ENCODE measurements at regions of chr2 and their contacts with region 1.

Region 1: GRCh38 chr2:215949991-215950404 is 63.4 kb downstream of the MREG start:
- DNase-seq: no peak
- H3K4me3 Mint-ChIP-seq: no peak overlapping the region
- H3K27ac Mint-ChIP-seq: no peak overlapping the region
- H3K4me1 Mint-ChIP-seq: peaks cover 4% of the 10 kb centered on the region
- H3K27me3 Mint-ChIP-seq: no peaks in the 10 kb centered on the region

Region 2: DNA sequence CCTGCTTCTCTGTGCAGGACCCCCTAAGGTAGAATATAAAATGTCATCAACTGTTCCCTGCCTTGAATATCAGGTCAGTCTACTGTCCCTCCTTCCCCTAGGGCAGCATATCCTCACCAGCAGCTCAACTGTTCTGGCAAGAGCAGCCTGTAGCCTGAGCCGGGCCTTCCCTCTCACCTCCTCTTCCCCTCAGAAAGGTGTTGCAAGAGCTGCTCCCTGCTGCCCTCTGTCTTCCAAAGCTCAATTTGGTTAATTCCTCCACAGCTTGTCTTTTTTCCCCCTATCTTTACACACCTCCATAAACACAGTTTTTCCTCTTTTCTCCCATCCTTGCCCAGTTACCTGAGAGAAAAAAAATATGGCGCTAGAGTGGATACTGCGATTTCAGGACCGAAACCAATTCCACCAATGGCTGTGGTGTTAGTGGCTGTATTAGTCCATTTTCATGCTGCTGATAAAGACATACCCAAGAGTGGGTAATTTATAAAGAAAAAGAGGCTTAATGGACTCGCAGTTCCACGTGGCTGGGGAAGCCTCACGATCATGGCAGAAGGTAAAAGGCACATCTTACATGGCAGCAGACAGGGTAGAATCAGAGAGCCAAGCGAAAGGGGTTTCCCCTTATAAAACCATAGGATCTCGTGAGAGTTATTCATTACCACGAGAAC is 121.3 kb before region 1 on chr2:
- intact Hi-C with region 1: no loop called
- DNase-seq: peak; percentile 77
- H3K4me3 Mint-ChIP-seq: no peak overlapping the region
- H3K27ac Mint-ChIP-seq: no peak overlapping the region
- H3K4me1 Mint-ChIP-seq: peaks cover 9% of the 10 kb centered on the region
- H3K27me3 Mint-ChIP-seq: peaks cover 10% of the 10 kb centered on the region

Region 3: GRCh38 chr2:216013080-216013909 is 63.3 kb after region 1 on chr2 and contains the start of gene MREG:
- intact Hi-C with region 1: loop called (anchors 2 kb)
- DNase-seq: peak; percentile 95
- H3K4me3 Mint-ChIP-seq: peak within 1 kb of the TSS; percentile 90
- H3K27ac Mint-ChIP-seq: peak within 1 kb of the TSS; percentile 71
- H3K4me1 Mint-ChIP-seq: peaks cover 47% of the 10 kb centered on the region
- H3K27me3 Mint-ChIP-seq: peaks cover 3% of the 10 kb centered on the region
- total RNA-seq, gene MREG: 10.6 and 10.9 TPM in 2 replicates

Region 4: GRCh38 chr2:216023055-216023648 is 73.2 kb after region 1 on chr2:
- intact Hi-C with region 1: loop called (anchors 1 kb)
- DNase-seq: peak; percentile 84
- H3K4me3 Mint-ChIP-seq: no peak overlapping the region
- H3K27ac Mint-ChIP-seq: no peak overlapping the region
- H3K4me1 Mint-ChIP-seq: peaks cover 7% of the 10 kb centered on the region
- H3K27me3 Mint-ChIP-seq: no peaks in the 10 kb centered on the region

Region 5: GRCh38 chr2:216119986-216120385 is 170.0 kb after region 1 on chr2:
- intact Hi-C with region 1: no loop called
- DNase-seq: peak; percentile 75
- H3K4me3 Mint-ChIP-seq: peak overlapping the region; percentile 68
- H3K27ac Mint-ChIP-seq: peak overlapping the region; percentile 96
- H3K4me1 Mint-ChIP-seq: peaks cover 69% of the 10 kb centered on the region
- H3K27me3 Mint-ChIP-seq: no peaks in the 10 kb centered on the region